Ascending aorta (tissue), 2 donors: ENCODE measurements at regions of chr11 and their contacts with region 1.

Region 1: DNA sequence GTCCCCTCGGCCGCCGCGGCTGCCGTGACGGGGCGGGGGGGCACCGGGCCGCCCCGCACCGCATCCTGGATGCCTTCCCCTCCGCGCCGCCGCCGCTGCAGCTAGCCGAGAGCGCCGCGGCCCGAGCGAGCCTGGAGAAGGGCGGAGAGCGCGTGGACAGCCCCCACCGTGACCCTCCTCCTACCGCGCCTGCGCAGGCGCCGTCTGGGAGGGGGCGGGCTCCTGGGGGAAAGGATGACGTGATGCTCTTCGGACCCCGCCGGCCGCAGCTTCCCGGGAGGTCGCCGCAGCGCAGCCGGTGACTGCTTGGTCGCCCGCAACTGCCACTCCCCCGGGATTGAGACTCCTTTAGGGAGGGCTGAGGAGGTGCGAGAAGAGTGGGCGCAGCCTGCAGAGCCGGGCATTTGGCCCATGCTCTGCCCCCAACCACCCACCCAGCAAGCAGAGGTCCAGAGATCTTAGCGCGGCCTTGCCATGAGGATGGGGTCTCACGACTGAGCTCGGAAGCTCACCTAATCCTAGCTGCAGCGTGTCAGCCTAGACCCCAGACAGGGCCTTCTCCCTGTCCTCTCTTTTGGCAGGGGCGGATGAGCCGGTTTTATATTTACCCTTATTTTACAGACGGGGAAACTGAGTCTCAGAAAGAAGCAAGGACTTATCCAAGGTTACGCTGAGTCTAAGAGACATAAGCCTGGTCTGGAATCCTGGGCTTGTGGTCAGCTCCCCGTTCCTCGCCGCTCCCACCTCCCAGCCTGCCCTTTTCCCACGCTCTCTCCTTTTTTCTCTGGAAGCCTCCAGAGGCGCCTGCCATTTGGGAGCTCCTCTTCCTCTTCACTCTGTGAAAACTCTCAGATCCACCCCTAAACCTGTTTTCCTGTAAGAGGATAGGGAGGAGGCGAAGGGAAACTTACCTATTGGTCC is at the start of gene DENND5A:
- DNase-seq: peak; percentile 39 to 91
- H3K4me3 ChIP-seq: peak within 1 kb of the TSS; percentile 85 to 91
- H3K27ac ChIP-seq: peak within 1 kb of the TSS; percentile 96 to 97
- H3K4me1 ChIP-seq: peaks cover 0 to 14% of the 10 kb centered on the region in 2 donors
- H3K27me3 ChIP-seq: no peaks in the 10 kb centered on the region
- CTCF ChIP-seq: no peak
- total RNA-seq, gene DENND5A: 111 TPM

Region 2: DNA sequence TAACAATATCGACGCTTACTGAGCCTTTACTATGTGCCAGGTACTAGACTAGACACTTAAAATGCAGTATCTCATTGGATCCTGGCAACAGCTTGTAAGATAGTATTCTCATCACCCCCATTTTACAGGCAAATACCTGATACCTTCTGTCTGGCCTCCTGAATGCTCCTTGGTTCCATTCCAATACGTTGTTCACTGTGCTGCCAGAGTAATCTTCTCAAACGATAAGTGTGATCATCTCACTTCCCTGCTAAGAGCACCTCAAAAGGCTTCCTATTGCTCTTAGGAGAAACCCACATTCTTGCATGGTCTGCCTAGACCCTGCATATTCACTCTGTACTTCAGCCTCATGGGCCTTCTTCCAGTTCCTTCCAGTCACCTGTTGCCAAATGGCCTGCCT is 260.4 kb before region 1 on chr11:
- intact Hi-C with region 1: no loop called
- DNase-seq: no peak
- H3K4me3 ChIP-seq: no peak overlapping the region
- H3K27ac ChIP-seq: no peak overlapping the region
- H3K4me1 ChIP-seq: peaks cover 0 to 14% of the 10 kb centered on the region in 2 donors
- H3K27me3 ChIP-seq: no peaks in the 10 kb centered on the region
- CTCF ChIP-seq: no peak

Region 3: GRCh38 chr11:9219572-9219971 is 45.9 kb before region 1 on chr11:
- intact Hi-C with region 1: loop called (anchors 5 kb)
- DNase-seq: no peak
- H3K4me3 ChIP-seq: no peak overlapping the region
- H3K27ac ChIP-seq: peak overlapping the region; percentile 42 to 63
- H3K4me1 ChIP-seq: peaks cover 0 to 11% of the 10 kb centered on the region in 2 donors
- H3K27me3 ChIP-seq: no peaks in the 10 kb centered on the region
- CTCF ChIP-seq: no peak

Region 4: GRCh38 chr11:9314291-9315036 is 49.0 kb after region 1 on chr11 and contains the start of gene TMEM41B:
- intact Hi-C with region 1: loop called (anchors 1 kb)
- DNase-seq: peak; percentile 94 to 99
- H3K4me3 ChIP-seq: peak within 1 kb of the TSS; percentile 59 to 73
- H3K27ac ChIP-seq: peak within 1 kb of the TSS; percentile 77 to 88
- H3K4me1 ChIP-seq: peaks cover 0 to 9% of the 10 kb centered on the region in 2 donors
- H3K27me3 ChIP-seq: no peaks in the 10 kb centered on the region
- CTCF ChIP-seq: peak in 2 of 3 experiments; percentile 2 to 8
- total RNA-seq, gene TMEM41B: 26.7 TPM

Region 5: GRCh38 chr11:9384535-9385303 is 119.2 kb after region 1 on chr11 and contains the start of gene IPO7:
- intact Hi-C with region 1: loop called (anchors 2 kb)
- DNase-seq: peak; percentile 70 to 95
- H3K4me3 ChIP-seq: peak within 1 kb of the TSS; percentile 86 to 97
- H3K27ac ChIP-seq: peak within 1 kb of the TSS; percentile 94 to 99
- H3K4me1 ChIP-seq: peaks cover 0 to 36% of the 10 kb centered on the region in 2 donors
- H3K27me3 ChIP-seq: no peaks in the 10 kb centered on the region
- CTCF ChIP-seq: peak; percentile 8 to 41 (median 38)
- total RNA-seq, gene IPO7: 93.4 TPM